ENCODE measurements at regions of chr16 and their contacts with region 1.

Region 1: GRCh38 chr16:85659805-85660495 is 28.8 kb downstream of the GINS2 start:
- DNase-seq: peak in 8 of 10 donors; percentile 68 to 84 (median 74)
- H3K4me3 ChIP-seq: no peak overlapping the region
- H3K27ac ChIP-seq: peak overlapping the region in 5 of 59 donors; percentile 23 to 53 (median 31)
- H3K27me3 ChIP-seq: no peaks in the 10 kb centered on the region
- CTCF ChIP-seq: peak; percentile 61 to 96 (median 90)

Region 2: GRCh38 chr16:85707528-85708321 is 47.8 kb after region 1 on chr16:
- intact Hi-C with region 1: no loop called
- DNase-seq: no peak
- H3K4me3 ChIP-seq: no peak overlapping the region
- H3K27ac ChIP-seq: no peak overlapping the region
- H3K27me3 ChIP-seq: no peaks in the 10 kb centered on the region
- CTCF ChIP-seq: no peak

Region 3: GRCh38 chr16:85799497-85800337 is 139.8 kb after region 1 on chr16 and contains the starts of genes COX4I1 and EMC8:
- intact Hi-C with region 1: loop called in 1 of 2 experiments (anchors 10 kb)
- DNase-seq: peak; percentile 87 to 96 (median 92)
- H3K4me3 ChIP-seq: peak within 1 kb of the TSS; percentile 56 to 100 (median 97)
- H3K27ac ChIP-seq: peak within 1 kb of the TSS; percentile 29 to 95 (median 88)
- H3K27me3 ChIP-seq: no peaks in the 10 kb centered on the region
- CTCF ChIP-seq: peak in 43 of 56 donors; percentile 8 to 62 (median 35)
- total RNA-seq, gene COX4I1: 458 to 914 (median 706) TPM
- total RNA-seq, gene EMC8: 14.6 to 36.5 (median 23.8) TPM